CD4-positive, alpha-beta T cell (primary cell): ENCODE measurements at regions of chr19 and their contacts with region 1.

Region 1: DNA sequence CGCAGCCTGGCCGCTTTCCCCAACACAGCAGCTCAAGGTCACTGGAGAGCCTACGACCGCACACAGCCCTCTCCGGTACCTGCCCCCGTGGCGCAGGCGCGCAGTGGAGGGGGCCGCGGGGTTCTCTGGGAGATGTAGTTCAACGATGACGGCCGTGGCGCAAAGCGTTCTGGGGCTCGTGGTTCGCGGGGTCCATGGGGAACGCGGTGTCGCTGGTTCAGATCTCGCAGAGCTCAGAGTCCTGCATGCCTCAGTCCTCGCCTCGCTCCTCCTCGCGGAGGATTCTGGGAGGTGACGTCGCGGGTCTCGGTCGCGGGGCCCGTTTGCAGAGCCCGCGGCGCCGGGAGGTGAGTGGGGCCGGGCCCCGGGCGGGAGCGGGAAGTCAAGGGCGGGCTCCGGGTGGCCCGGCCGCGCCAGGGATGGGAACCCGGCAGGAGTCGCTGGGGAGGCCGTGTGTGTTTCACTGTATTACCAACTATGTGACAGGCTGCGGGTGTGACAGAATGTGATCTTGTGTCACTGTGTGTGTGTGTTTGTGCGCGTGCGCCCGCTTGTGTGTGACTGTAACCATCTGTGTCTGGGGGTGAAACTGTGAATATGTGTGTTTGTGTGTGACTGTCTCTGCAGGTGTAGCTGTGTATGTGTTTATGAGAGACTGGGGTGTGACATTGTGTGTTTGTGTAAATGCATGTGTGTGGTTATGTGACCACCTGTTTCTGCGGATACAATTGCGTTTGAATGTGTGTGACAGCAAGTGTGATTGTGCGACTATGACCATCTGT is at the start of gene ZNF527:
- DNase-seq: peak; percentile 93 to 98 (median 96)
- ATAC-seq: peak; percentile 96
- H3K4me3 ChIP-seq: peak within 1 kb of the TSS; percentile 59
- H3K4me3 Mint-ChIP-seq: peak within 1 kb of the TSS; percentile 96
- H3K27ac ChIP-seq: peak within 1 kb of the TSS; percentile 76 to 85
- H3K27ac Mint-ChIP-seq: peak within 1 kb of the TSS; percentile 96
- H3K4me1 ChIP-seq: peaks cover 17% of the 10 kb centered on the region
- H3K4me1 Mint-ChIP-seq: peaks cover 16% of the 10 kb centered on the region
- H3K27me3 ChIP-seq: no peaks in the 10 kb centered on the region
- H3K27me3 Mint-ChIP-seq: no peaks in the 10 kb centered on the region
- CTCF ChIP-seq: no peak
- total RNA-seq, gene ZNF527: 7.8 to 8.4 TPM

Region 2: DNA sequence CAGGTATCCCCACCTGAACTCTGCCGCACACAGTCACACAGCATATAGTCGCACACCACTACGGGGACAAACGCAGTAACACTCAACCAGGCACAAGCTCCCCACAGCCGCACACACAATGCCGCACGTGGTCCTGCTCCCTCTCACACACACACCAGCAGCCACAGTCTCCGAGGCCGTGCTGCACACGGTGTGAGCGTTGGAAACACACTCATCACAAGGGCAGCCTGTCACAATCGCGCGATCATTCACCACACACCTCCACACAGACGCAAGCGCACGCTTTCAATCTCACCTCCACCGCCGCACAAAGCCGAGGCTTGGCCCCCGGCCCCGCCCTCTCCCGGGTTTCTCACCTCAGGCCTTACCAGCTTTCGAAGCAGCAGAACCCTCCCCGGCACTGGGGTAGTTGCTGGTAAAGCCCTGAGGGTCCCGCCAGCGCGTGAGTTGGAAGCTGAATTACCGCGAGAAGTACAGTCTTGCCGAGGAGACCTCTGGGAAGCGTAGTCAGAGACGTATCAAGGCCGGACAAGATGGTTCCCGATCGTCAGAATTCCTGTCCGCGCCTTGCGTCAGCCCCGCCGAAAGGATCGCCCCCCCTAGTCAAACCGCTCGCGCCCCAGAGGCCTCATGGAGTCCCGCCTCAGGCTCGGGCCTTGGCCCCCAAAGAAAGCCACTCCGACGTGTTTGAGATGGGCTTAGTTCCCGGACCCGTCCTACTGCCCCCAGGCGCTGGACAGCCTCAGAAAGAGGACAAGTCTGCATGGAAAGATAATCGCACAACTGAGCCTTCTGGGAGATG is 881.8 kb before region 1 on chr19 and contains the start of gene ZNF566:
- CTCF ChIA-PET with region 1: no interaction called
- POLR2A ChIA-PET with region 1: interaction called, 11 read pairs
- intact Hi-C with region 1: no loop called
- DNase-seq: peak; percentile 84 to 97 (median 89)
- ATAC-seq: peak; percentile 90
- H3K4me3 ChIP-seq: peak within 1 kb of the TSS; percentile 64
- H3K4me3 Mint-ChIP-seq: peak within 1 kb of the TSS; percentile 97
- H3K27ac ChIP-seq: peak within 1 kb of the TSS; percentile 84 to 87
- H3K27ac Mint-ChIP-seq: peak within 1 kb of the TSS; percentile 99
- H3K4me1 ChIP-seq: peaks cover 19% of the 10 kb centered on the region
- H3K4me1 Mint-ChIP-seq: peaks cover 36% of the 10 kb centered on the region
- H3K27me3 ChIP-seq: no peaks in the 10 kb centered on the region
- H3K27me3 Mint-ChIP-seq: no peaks in the 10 kb centered on the region
- CTCF ChIP-seq: no peak
- total RNA-seq, gene ZNF566: 6.3 to 6.8 TPM

Region 3: GRCh38 chr19:36973021-36973843 is 397.8 kb before region 1 on chr19:
- CTCF ChIA-PET with region 1: no interaction called
- POLR2A ChIA-PET with region 1: interaction called, 3 read pairs
- intact Hi-C with region 1: loop called in 1 of 2 experiments (anchors 10 kb)
- DNase-seq: peak; percentile 48 to 91 (median 72)
- ATAC-seq: peak; percentile 98
- H3K4me3 ChIP-seq: peak overlapping the region; percentile 83
- H3K4me3 Mint-ChIP-seq: peak overlapping the region; percentile 92
- H3K27ac ChIP-seq: peak overlapping the region; percentile 57 to 78
- H3K27ac Mint-ChIP-seq: peak overlapping the region; percentile 94
- H3K4me1 ChIP-seq: peaks cover 17% of the 10 kb centered on the region
- H3K4me1 Mint-ChIP-seq: peaks cover 16% of the 10 kb centered on the region
- H3K27me3 ChIP-seq: no peaks in the 10 kb centered on the region
- H3K27me3 Mint-ChIP-seq: no peaks in the 10 kb centered on the region
- CTCF ChIP-seq: peak; percentile 97

Region 4: GRCh38 chr19:37217855-37218591 is 153.0 kb before region 1 on chr19 and contains the start of gene ZNF383:
- CTCF ChIA-PET with region 1: no interaction called
- POLR2A ChIA-PET with region 1: interaction called, 8 read pairs
- intact Hi-C with region 1: loop called in 1 of 2 experiments (anchors 5 kb)
- DNase-seq: peak; percentile 66 to 90 (median 78)
- ATAC-seq: peak; percentile 81
- H3K4me3 ChIP-seq: peak within 1 kb of the TSS; percentile 94
- H3K4me3 Mint-ChIP-seq: peak within 1 kb of the TSS; percentile 93
- H3K27ac ChIP-seq: peak within 1 kb of the TSS; percentile 81 to 90
- H3K27ac Mint-ChIP-seq: peak within 1 kb of the TSS; percentile 89
- H3K4me1 ChIP-seq: peaks cover 14% of the 10 kb centered on the region
- H3K4me1 Mint-ChIP-seq: peaks cover 42% of the 10 kb centered on the region
- H3K27me3 ChIP-seq: no peaks in the 10 kb centered on the region
- H3K27me3 Mint-ChIP-seq: no peaks in the 10 kb centered on the region
- CTCF ChIP-seq: no peak
- total RNA-seq, gene ZNF383: 13.1 to 15.7 TPM

Region 5: DNA sequence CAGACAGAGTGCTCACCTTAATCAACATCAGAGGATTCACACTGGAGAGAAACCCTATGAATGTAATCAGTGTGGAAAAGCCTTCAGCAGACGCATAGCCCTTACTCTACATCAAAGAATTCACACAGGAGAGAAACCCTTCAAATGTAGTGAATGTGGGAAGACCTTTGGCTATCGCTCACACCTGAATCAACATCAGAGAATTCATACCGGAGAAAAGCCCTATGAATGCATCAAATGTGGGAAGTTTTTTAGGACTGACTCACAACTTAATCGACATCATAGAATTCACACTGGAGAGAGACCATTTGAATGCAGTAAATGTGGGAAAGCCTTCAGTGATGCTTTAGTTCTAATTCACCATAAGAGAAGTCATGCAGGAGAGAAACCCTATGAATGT is 18.2 kb after region 1 on chr19:
- CTCF ChIA-PET with region 1: no interaction called
- POLR2A ChIA-PET with region 1: no interaction called
- intact Hi-C with region 1: no loop called
- DNase-seq: no peak
- ATAC-seq: no peak
- H3K4me3 ChIP-seq: no peak overlapping the region
- H3K4me3 Mint-ChIP-seq: no peak overlapping the region
- H3K27ac ChIP-seq: no peak overlapping the region
- H3K27ac Mint-ChIP-seq: no peak overlapping the region
- H3K4me1 ChIP-seq: no peaks in the 10 kb centered on the region
- H3K4me1 Mint-ChIP-seq: no peaks in the 10 kb centered on the region
- H3K27me3 ChIP-seq: no peaks in the 10 kb centered on the region
- H3K27me3 Mint-ChIP-seq: no peaks in the 10 kb centered on the region
- CTCF ChIP-seq: no peak

Region 6: DNA sequence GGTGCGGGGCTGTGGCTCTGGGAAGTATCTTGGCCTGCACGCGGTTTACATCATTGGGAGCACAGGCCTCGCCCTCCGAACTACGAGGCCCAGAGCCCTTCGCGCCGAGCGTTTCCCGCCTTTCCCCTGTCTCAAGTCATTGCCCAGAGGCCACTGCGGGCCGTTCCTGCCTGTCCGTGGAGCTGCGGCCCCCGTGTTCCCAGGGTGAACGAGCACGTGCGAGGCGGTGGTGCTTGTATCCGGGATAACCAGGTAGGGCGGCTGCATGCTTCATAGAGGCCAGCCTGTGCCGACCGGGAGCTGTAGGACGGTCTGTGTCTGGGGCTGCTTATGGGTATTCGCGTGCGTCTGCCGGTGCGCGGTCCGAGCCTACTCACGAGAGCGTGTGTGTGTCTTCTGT is 32.3 kb after region 1 on chr19:
- CTCF ChIA-PET with region 1: no interaction called
- POLR2A ChIA-PET with region 1: no interaction called
- intact Hi-C with region 1: no loop called
- DNase-seq: no peak
- ATAC-seq: no peak
- H3K4me3 ChIP-seq: no peak overlapping the region
- H3K4me3 Mint-ChIP-seq: no peak overlapping the region
- H3K27ac ChIP-seq: no peak overlapping the region
- H3K27ac Mint-ChIP-seq: no peak overlapping the region
- H3K4me1 ChIP-seq: no peaks in the 10 kb centered on the region
- H3K4me1 Mint-ChIP-seq: no peaks in the 10 kb centered on the region
- H3K27me3 ChIP-seq: no peaks in the 10 kb centered on the region
- H3K27me3 Mint-ChIP-seq: no peaks in the 10 kb centered on the region
- CTCF ChIP-seq: no peak

Region 7: DNA sequence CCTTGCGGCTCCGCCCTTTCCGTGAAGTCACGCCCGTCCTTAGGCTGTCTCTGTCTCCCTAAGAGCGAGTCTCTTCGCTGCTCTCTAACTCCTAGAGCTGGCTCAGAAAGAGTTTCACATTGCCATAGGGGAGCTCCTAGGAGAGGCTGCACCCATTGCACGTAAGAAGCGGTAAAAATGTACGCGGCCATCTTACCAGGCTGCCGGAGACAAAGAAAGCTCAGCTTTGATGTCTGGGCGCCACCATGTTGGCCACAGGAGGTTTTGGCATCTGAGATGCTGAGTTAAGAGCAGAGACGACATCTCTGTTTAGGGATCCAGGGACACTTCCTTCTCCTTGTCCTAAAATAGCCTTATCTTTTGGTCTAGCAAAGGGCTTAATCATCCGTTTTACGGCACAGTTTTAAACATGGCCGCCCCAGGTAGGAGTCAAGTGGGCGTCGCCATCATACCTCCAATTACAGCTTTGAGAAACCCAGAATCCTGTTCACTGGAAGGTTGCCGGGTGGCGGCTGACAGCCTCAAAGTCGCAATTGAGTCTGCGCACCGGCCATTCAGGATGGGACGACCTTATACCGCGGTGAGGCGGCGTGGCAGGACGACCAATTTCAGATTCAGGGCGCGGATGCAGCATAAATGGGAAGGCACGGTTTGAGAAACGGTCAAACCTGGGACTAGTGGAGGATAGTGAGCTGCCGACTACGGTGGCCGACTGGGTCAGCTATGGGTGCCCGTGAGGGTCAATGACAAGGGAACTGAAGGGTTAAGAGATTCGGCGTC is 135.5 kb after region 1 on chr19 and contains the start of gene ZNF793:
- CTCF ChIA-PET with region 1: interaction called, 5 read pairs
- POLR2A ChIA-PET with region 1: interaction called, 38 read pairs
- intact Hi-C with region 1: loop called in 1 of 2 experiments (anchors 1 kb)
- DNase-seq: peak; percentile 68 to 92 (median 78)
- ATAC-seq: peak; percentile 85
- H3K4me3 ChIP-seq: peak within 1 kb of the TSS; percentile 68
- H3K4me3 Mint-ChIP-seq: no peak within 1 kb of the TSS
- H3K27ac ChIP-seq: peak within 1 kb of the TSS; percentile 88 to 92
- H3K27ac Mint-ChIP-seq: no peak within 1 kb of the TSS
- H3K4me1 ChIP-seq: peaks cover 20% of the 10 kb centered on the region
- H3K4me1 Mint-ChIP-seq: no peaks in the 10 kb centered on the region
- H3K27me3 ChIP-seq: no peaks in the 10 kb centered on the region
- H3K27me3 Mint-ChIP-seq: no peaks in the 10 kb centered on the region
- CTCF ChIP-seq: no peak
- total RNA-seq, gene ZNF793: 2.3 TPM